ENCODE measurements at regions of chr16 and their contacts with region 1.

Region 1: GRCh38 chr16:28063641-28064061 is at the start of gene GSG1L:
- DNase-seq: no peak
- H3K4me3 ChIP-seq: no peak within 1 kb of the TSS
- H3K4me1 ChIP-seq: no peaks in the 10 kb centered on the region
- H3K27me3 ChIP-seq: peaks cover 54% of the 10 kb centered on the region

Region 2: DNA sequence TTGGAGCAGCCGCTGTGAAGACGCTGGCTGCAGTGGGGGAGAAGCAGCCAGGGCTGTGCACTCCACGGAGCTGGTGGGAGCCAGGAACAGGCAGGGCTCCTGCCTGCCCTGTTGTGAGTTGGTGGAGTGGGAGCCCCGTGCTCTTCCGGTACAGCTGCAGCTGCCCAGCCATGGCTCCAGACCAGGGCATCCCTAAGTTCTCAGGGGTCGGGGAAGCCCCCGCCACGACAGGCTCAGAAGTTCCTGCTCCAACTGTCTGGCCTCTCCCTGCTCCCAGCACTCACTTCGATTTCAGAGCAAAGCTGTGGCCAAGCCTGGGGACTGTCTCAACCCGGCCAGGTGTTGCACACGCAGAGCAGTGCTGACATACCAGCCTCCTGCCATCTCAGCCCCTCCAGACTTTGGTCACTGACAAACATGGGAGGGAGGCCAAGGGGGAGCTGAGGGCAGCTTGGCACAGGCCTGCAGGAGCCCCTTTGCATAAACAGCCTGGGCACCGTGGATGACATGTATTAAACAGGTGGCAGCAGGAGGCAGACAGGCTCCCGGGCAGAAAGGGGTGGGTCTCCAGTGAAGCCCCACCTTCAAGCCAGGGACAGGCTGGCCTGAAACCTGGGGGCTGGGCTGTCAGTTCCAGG is 874.2 kb before region 1 on chr16:
- in situ Hi-C with region 1: no loop called
- DNase-seq: no peak
- H3K4me3 ChIP-seq: no peak overlapping the region
- H3K4me1 ChIP-seq: no peaks in the 10 kb centered on the region
- H3K27me3 ChIP-seq: no peaks in the 10 kb centered on the region

Region 3: DNA sequence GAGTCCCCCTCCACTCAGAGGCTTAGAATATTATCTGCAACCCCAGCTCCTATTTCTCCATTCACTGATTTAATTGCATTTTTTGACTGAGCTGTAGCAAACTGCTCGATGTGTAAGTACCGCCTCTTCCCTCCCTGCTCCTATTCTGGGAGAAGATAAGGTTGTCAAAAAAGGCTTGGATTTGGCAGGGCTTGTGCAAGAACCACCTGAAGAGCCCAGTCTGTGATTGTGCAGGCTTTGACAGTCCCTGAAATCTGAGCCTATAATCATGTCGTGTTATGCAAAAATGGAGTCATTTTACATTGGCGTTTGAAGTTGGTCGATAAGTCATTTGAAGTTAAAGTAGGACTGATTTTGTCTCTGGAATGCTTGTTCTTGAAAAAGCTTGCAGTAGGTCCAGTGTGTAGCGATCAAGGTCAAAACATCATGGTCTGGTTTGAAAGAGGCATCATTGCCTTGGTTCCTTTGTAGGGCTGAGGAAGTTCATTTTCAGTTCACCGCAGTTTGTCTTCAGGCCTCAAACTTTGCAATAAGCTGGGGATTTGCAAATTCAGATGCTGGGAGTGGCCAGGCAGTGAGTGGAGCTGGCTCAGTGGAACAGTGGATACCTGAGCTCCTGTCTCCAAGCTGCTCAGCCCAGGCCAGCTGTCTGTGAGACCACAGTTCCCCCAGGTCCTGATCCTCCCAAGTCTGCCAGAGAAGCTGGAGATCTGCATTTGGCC is 444.9 kb before region 1 on chr16:
- in situ Hi-C with region 1: loop called (anchors 25 kb)
- DNase-seq: no peak
- H3K4me3 ChIP-seq: no peak overlapping the region
- H3K4me1 ChIP-seq: peaks cover 3% of the 10 kb centered on the region; the same call in 1 of the 2 replicates
- H3K27me3 ChIP-seq: no peaks in the 10 kb centered on the region

Region 4: DNA sequence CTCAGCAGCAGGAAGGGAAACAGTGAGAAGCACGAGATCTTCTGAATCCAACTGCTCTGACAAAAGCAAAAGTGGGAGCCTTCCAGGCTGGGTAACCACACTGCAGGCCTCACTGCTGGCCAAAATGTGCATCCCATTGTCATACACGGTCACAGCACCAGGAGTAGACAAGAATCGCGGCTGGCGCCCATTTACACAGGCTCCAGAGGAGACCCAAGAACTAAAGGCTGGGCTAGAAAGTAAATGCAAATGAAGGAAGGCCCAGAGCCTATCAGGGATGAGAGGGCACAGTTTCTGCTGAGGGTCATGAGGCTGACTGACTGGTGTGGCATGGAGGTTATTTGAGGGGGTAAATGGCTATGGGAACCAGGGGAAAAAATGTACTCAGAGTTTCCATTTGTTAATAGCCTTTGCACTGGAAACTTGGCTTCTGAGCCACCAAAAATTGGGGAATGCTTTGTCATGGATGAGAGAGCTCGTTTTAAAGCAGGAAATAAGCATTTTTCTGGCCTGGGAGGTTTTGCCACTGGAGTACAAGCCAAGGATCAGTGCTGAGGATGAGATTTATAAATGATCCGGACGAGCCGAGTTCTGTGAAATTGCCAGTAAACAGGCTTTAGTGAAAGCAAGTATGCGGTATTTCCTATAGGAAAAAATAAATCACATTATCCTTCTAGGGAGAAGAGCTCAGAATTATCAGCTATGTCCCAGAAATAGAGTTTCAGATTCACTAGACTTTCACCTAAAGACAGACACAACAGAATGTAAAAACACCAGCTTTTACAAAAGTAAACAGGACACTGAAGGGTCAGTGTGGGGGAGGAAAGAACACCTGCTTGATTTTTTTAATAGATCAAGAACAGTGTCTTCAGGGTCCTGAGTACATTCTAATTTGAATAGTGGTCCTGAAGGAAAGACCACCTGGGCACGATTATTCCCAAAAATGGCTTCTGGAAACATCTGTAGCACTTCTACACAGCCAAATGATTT is 66.7 kb after region 1 on chr16:
- in situ Hi-C with region 1: no loop called
- DNase-seq: no peak
- H3K4me3 ChIP-seq: no peak overlapping the region
- H3K4me1 ChIP-seq: no peaks in the 10 kb centered on the region
- H3K27me3 ChIP-seq: no peaks in the 10 kb centered on the region